Activated naive CD4-positive, alpha-beta T cell treated with anti-CD3 and anti-CD28 coated beads for 36 hours (primary cell): ENCODE measurements at regions of chr16 and their contacts with region 1.

Region 1: GRCh38 chr16:22335668-22336246 is 38.5 kb downstream of the POLR3E start:
- DNase-seq: no peak
- H3K4me3 Mint-ChIP-seq: no peak overlapping the region
- H3K27ac Mint-ChIP-seq: no peak overlapping the region
- H3K4me1 Mint-ChIP-seq: peaks cover 11% of the 10 kb centered on the region
- H3K27me3 Mint-ChIP-seq: no peaks in the 10 kb centered on the region

Region 2: DNA sequence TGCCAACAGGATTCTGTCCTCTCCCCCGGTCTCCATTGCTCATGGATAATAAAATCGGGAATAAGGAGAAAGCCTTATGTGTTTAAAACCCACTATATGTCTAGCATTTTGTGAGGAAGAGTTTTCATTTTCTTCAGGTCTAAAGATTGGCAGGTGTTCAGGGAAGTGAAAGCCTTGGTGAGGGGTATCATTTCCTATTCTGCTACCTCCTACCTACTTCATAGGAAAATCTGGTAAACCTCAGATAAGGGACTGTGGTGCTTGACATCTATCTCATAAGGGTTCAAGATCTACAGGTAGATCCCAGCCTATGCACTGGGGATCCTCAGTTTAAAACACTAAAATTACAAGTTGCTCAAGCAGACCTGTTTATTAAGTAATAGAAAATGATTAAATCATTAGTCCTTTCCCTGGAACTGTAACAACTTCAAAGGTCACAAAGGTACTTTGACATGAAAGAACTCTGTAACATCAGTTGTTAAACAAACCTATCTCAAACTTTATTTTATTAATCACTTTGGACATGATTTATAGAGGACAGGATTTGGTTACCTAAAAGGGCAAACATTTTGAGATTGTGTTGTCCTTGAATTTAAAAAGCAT is 321.4 kb before region 1 on chr16:
- CTCF ChIA-PET with region 1: no interaction called
- intact Hi-C with region 1: no loop called
- DNase-seq: no peak
- H3K4me3 Mint-ChIP-seq: no peak overlapping the region
- H3K27ac Mint-ChIP-seq: no peak overlapping the region
- H3K4me1 Mint-ChIP-seq: peaks cover 78% of the 10 kb centered on the region
- H3K27me3 Mint-ChIP-seq: no peaks in the 10 kb centered on the region

Region 3: GRCh38 chr16:22353191-22353919 is 17.6 kb after region 1 on chr16:
- CTCF ChIA-PET with region 1: interaction called, 3 read pairs
- intact Hi-C with region 1: loop called (anchors 2 kb)
- DNase-seq: peak; percentile 55
- H3K4me3 Mint-ChIP-seq: peak overlapping the region; percentile 18
- H3K27ac Mint-ChIP-seq: peak overlapping the region; percentile 96
- H3K4me1 Mint-ChIP-seq: peaks cover 55% of the 10 kb centered on the region
- H3K27me3 Mint-ChIP-seq: no peaks in the 10 kb centered on the region